CD8-positive, alpha-beta memory T cell (primary cell): ENCODE measurements at regions of chr11 and their contacts with region 1.

Region 1: DNA sequence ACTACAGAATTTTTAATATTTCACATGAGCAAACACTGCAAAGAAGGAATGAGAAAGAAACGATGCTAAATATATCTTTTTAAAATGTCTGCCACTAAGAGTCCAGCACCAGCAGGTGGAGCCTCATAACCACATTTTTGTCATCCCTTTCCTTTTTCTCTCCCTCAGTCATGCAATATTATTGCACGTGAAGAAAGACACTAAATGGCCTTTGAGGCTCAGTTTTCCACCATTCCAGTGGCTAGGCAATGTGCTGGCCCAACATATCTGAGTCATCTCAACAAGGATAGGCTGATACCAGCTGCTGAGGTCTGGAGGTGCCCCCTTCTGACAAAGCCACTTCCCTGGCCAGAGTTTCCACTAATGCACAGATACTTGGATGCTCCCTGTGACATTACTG is 1.8 kb downstream of the ALKBH8 start:
- DNase-seq: peak in 3 of 5 donors; percentile 34 to 52 (median 36)
- H3K4me3 ChIP-seq: no peak overlapping the region
- H3K4me3 Mint-ChIP-seq: peak overlapping the region in 6 of 7 donors; percentile 4 to 43 (median 31)
- H3K27ac ChIP-seq: no peak overlapping the region
- H3K27ac Mint-ChIP-seq: peak overlapping the region in 7 of 8 donors; percentile 36 to 76 (median 52)
- H3K4me1 ChIP-seq: peaks cover 29% of the 10 kb centered on the region
- H3K4me1 Mint-ChIP-seq: peaks cover 43 to 62% (median 59%) of the 10 kb centered on the region in 3 donors
- H3K27me3 ChIP-seq: no peaks in the 10 kb centered on the region
- H3K27me3 Mint-ChIP-seq: no peaks in the 10 kb centered on the region

Region 2: GRCh38 chr11:107408762-107409211 is 154.9 kb before region 1 on chr11:
- CTCF ChIA-PET with region 1: no interaction called
- POLR2A ChIA-PET with region 1: no interaction called
- DNase-seq: no peak
- H3K4me3 ChIP-seq: no peak overlapping the region
- H3K4me3 Mint-ChIP-seq: no peak overlapping the region
- H3K27ac ChIP-seq: no peak overlapping the region
- H3K27ac Mint-ChIP-seq: no peak overlapping the region
- H3K4me1 ChIP-seq: no peaks in the 10 kb centered on the region
- H3K4me1 Mint-ChIP-seq: peaks cover 0 to 6% (median 2%) of the 10 kb centered on the region in 3 donors
- H3K27me3 ChIP-seq: no peaks in the 10 kb centered on the region
- H3K27me3 Mint-ChIP-seq: no peaks in the 10 kb centered on the region

Region 3: DNA sequence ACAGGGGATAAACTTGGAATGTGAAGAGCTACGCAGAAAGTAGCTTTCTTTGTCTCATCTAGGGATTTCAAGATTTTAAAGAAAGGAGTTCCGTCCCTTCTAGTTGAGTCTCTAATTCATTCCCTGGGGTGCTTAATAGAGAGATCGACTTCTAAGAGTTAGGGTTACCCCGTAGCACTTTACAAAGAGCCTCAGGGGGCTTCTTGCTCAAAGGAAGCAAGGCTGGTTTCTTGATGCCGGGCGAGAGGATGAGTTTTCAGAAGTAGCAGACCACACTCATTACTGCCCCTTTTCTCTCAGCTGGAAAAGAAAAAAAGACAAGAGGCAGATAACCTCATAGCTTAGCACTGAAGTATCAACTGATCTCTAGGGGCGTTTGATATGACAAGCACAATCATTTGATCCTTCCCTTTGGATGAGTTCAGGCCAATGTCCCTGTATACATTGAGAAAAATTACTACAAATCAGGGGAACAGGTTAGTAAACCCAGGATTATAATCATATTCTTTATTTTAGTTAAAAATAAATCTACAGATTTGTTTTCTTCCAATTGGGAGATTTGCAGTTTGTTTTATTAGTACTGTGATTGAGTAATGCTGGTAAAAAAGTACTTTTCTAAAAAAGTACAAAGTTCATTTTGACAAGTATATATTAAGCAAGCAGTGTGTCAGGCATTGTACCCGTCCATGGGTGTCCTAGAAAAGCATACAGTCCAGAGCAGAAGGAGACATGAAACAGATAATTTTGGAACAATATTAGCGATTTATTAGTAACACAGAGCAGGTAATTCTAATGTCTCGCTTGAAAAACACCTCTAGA is 45.9 kb after region 1 on chr11:
- CTCF ChIA-PET with region 1: no interaction called
- POLR2A ChIA-PET with region 1: no interaction called
- DNase-seq: no peak
- H3K4me3 ChIP-seq: no peak overlapping the region
- H3K4me3 Mint-ChIP-seq: no peak overlapping the region
- H3K27ac ChIP-seq: no peak overlapping the region
- H3K27ac Mint-ChIP-seq: no peak overlapping the region
- H3K4me1 ChIP-seq: no peaks in the 10 kb centered on the region
- H3K4me1 Mint-ChIP-seq: no peaks in the 10 kb centered on the region
- H3K27me3 ChIP-seq: peaks cover 4% of the 10 kb centered on the region
- H3K27me3 Mint-ChIP-seq: peaks cover 22 to 55% of the 10 kb centered on the region in 2 donors

Region 4: DNA sequence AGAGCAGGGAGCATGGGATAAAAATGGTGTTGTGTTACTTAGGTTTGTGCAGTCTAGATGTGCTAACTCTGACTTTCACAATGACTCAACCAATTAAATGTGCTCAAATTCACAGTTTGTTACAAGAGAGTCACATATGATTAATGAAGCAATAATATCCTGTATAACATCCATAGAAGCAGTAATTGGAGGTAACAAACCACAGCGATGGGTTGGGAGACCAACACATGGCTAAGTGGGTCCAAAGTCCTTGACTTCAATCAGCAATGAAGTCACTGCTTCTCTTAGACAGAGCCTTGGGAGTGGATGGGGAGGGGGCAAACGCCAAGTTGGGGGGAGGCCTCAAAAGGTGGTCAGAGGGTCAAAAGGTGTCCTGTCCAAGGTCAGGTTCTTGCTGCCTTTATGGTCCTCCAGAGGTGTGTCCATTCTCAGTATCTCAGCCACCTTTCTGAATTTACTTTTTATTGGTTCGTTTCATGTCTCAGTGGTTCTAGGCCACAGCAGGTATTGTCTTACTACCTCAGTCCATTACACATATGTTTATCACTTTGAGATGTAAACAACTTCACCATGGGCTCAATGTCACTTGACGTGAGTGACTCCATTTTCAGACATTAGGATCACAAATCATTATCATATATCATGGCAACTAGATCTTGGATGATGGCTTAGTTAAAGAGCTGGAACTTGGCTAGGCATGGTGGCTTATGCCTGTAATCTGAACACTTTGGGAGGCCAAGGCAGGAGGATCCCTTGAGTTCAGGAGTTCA is 115.7 kb after region 1 on chr11:
- CTCF ChIA-PET with region 1: no interaction called
- POLR2A ChIA-PET with region 1: no interaction called
- DNase-seq: no peak
- H3K4me3 ChIP-seq: no peak overlapping the region
- H3K4me3 Mint-ChIP-seq: no peak overlapping the region
- H3K27ac ChIP-seq: no peak overlapping the region
- H3K27ac Mint-ChIP-seq: no peak overlapping the region
- H3K4me1 ChIP-seq: no peaks in the 10 kb centered on the region
- H3K4me1 Mint-ChIP-seq: peaks cover 0 to 4% (median 0%) of the 10 kb centered on the region in 3 donors
- H3K27me3 ChIP-seq: no peaks in the 10 kb centered on the region
- H3K27me3 Mint-ChIP-seq: peaks cover 5 to 19% of the 10 kb centered on the region in 2 donors

Region 5: DNA sequence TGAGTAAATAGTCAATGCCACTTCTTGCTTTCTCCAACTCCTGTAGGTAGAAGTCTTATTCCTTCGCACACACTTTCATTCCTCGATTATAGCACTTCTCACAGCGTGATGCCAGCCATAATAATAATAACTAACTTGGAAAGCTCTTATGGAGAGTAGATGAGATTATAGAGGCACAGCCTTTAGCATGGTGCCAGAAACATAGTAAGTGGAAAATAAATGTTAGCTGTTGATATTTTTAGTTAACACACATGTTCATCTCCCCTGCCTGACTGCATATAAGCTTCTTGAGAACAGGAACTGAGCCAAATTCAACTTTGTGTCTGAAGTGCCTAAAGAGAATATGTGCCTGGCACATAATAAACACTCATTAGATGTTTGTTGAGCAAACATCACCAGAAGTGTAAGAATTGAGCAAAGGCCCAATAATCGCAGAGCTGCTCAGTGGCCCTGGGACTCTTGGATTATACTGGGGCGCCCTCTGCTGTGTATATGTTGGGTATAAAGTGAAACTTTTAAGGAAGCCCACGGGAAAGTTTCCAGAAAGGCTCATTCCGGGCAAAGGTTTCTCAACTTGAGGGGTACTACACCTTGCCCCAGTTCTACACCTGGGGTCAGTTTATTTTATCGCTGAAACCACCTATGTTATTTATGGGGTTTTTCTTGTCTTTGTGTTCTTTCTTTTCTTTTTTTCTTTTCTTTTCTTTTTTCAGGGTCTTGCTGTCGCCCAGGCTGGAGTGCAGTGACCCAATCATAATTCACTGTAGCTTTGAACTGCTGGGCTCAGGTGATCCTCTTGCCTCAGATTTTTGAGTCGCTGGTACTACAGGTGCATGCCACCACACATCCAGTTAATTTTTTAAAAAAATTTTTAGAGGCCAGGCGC is 125.9 kb after region 1 on chr11:
- CTCF ChIA-PET with region 1: interaction called, 15 read pairs
- POLR2A ChIA-PET with region 1: no interaction called
- DNase-seq: peak; percentile 11 to 64 (median 26)
- H3K4me3 ChIP-seq: no peak overlapping the region
- H3K4me3 Mint-ChIP-seq: no peak overlapping the region
- H3K27ac ChIP-seq: no peak overlapping the region
- H3K27ac Mint-ChIP-seq: peak overlapping the region in 1 of 8 donors; percentile 36
- H3K4me1 ChIP-seq: no peaks in the 10 kb centered on the region
- H3K4me1 Mint-ChIP-seq: no peaks in the 10 kb centered on the region
- H3K27me3 ChIP-seq: no peaks in the 10 kb centered on the region
- H3K27me3 Mint-ChIP-seq: peaks cover 0 to 32% of the 10 kb centered on the region in 2 donors